HepG2 (cell line): ENCODE measurements at regions of chr2 and their contacts with region 1.

Region 1: GRCh38 chr2:158255257-158255656 is 153.6 kb downstream of the UPP2 start:
- DNase-seq: no peak
- ATAC-seq: no peak
- H3K4me3 ChIP-seq: no peak overlapping the region
- H3K27ac ChIP-seq: no peak overlapping the region
- H3K4me1 ChIP-seq: peaks cover 14% of the 10 kb centered on the region; the same call in 1 of the 2 replicates
- H3K27me3 ChIP-seq: no peaks in the 10 kb centered on the region
- CTCF ChIP-seq: no peak
- EP300 ChIP-seq: no peak
- POLR2A ChIP-seq: no peak
- RAD21 ChIP-seq: no peak

Region 2: DNA sequence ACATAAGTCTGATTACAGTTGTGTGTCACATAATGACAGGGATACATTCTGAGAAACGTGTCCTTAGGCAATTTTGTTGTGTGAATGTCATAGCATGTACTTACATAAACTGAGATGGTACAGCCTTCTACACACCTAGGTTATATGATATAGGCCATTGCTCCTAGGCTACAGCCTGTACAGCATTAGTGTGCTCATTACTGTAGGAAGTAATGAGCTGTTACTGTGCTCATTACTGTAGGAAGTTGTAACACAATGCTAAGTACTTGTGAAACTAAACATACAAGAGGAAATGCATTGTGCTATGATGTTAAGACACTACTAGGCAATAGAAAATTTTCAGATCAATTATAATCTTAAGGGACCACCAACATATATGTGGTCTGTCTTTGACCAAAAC is 80.8 kb before region 1 on chr2:
- CTCF ChIA-PET with region 1: no interaction called
- POLR2A ChIA-PET with region 1: no interaction called
- in situ Hi-C with region 1: no loop called
- intact Hi-C with region 1: no loop called
- DNase-seq: no peak
- ATAC-seq: no peak
- H3K4me3 ChIP-seq: no peak overlapping the region
- H3K27ac ChIP-seq: no peak overlapping the region
- H3K4me1 ChIP-seq: no peaks in the 10 kb centered on the region
- H3K27me3 ChIP-seq: no peaks in the 10 kb centered on the region
- CTCF ChIP-seq: no peak
- EP300 ChIP-seq: no peak
- POLR2A ChIP-seq: no peak
- RAD21 ChIP-seq: no peak

Region 3: DNA sequence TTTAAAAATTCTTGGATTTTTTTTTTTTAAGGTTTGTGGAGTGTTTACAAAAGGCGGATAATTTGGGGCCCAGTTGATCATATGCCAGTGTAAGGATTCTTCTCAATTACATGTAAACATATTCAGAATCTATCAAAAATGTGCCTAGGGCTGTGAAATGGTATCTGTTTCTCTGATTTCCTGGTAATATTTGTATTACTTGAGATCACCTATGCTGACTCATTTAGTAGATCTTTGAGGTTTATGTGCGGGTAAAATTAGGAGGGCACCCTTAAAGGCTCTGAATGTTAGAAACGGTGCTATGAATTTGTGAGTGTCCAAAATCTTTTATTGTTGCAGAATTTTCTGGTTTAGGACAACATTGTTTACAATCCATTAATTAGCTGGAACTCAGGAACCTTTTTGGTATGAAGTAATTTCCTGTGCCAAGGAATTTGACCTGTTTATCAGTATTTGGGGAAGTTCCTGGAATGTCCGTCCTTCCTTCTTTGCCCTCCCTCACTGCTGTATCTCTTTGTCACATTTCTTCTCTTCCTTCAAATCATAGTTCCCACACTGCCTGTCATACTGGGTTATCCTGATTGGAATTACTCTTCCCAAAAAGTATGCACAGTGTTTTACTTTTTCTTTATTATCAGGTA is 843.7 kb after region 1 on chr2:
- CTCF ChIA-PET with region 1: no interaction called
- POLR2A ChIA-PET with region 1: no interaction called
- in situ Hi-C with region 1: no loop called
- intact Hi-C with region 1: loop called (anchors 5 kb)
- DNase-seq: peak; percentile 18
- ATAC-seq: peak; percentile 49; the same call in 2 of the 3 replicates
- H3K4me3 ChIP-seq: no peak overlapping the region
- H3K27ac ChIP-seq: no peak overlapping the region
- H3K4me1 ChIP-seq: peaks cover 26% of the 10 kb centered on the region
- H3K27me3 ChIP-seq: no peaks in the 10 kb centered on the region
- CTCF ChIP-seq: no peak
- EP300 ChIP-seq: peak in 1 of 2 experiments; percentile 16; a peak in 1 of 4 replicates
- POLR2A ChIP-seq: no peak
- RAD21 ChIP-seq: no peak